ENCODE measurements at regions of chr12 and their contacts with region 1.

Region 1: GRCh38 chr12:59595883-59596540 is at the start of gene SLC16A7:
- DNase-seq: peak; percentile 95
- ATAC-seq: peak; percentile 90
- total RNA-seq, gene SLC16A7: 98.0 TPM

Region 2: GRCh38 chr12:59619461-59620240 is 23.6 kb after region 1 on chr12:
- intact Hi-C with region 1: loop called (anchors 1 kb)
- DNase-seq: no peak
- ATAC-seq: no peak

Region 3: GRCh38 chr12:59665701-59666100 is 69.7 kb after region 1 on chr12:
- intact Hi-C with region 1: loop called (anchors 2 kb)
- DNase-seq: no peak
- ATAC-seq: no peak

Region 4: DNA sequence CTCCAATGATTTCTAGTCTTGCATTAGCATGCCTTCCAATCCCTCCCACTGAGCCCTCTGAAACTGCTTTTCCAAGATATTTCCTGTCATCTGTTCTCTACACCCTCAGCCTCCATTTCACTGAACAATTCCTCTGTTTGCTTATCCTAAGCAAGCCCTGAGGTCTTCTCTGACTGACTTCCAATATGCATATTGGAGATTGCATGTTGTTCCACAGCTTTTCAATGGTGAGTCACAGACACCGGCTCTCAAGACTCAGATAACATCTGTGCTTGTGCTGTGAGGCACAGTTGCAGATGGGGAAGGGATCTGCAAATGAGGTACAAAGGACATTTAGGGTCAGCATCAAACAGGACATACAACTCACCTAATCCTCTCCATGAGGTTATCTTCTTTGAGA is 140.8 kb after region 1 on chr12:
- intact Hi-C with region 1: loop called (anchors 5 kb)
- DNase-seq: no peak
- ATAC-seq: peak; percentile 27

Region 5: DNA sequence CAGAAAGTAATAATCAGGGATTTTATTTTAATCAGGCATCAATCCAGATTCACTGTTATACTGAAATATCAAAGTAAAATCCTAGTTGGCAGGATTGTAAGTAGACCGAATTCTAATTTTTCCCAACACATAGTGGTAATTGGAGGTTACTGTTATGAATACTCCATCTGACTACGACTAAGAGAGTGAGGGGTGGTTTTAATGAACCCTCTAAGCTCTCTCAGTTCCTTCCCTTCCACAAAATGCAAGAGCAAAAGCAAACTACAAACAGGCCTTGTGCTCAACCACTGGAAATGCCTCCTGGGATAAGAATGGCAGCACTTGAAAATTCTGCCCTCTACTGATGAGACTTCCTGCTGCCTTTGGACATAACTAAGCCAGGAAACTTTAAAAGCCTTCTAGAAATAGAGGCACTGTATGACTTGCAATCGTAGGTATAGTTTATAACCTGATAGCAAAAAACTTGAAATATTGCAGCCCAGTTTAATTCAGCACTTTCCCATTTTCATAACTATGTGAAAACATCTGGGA is 184.7 kb after region 1 on chr12:
- intact Hi-C with region 1: loop called (anchors 5 kb)
- DNase-seq: no peak
- ATAC-seq: peak; percentile 44

Measured in Right ventricle myocardium inferior (tissue), 1 donor.